ENCODE measurements at regions of chr12 and their contacts with region 1.

Region 1: DNA sequence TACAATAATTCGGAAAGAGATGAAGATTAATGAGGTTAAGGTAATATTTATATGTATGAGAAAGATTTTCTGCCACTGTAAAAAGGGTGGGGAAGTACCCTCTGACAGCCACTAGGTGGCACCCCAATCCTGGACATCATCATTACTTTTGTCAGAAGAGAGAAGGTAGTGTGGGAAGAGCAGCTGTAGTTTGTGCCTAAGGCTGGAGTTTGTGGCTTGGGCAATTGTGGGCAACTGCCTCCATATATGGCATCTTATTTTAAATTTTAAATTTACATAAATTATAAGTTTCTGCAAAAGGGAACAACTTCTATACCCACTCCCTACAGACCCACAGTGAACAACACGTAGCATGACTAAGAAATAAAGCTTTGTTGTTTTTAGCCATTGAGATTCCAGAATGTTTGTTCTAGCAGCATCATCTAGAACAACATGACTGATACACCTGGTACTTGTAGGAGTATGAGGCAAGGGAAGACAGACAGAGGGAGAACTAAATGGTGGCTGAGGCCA is 34.4 kb upstream of the SYCP3 start:
- DNase-seq: peak; percentile 65 to 76
- ATAC-seq: peak; percentile 86 to 94
- H3K4me3 ChIP-seq: no peak overlapping the region
- H3K27ac ChIP-seq: no peak overlapping the region
- H3K4me1 ChIP-seq: no peaks in the 10 kb centered on the region
- CTCF ChIP-seq: peak; percentile 97
- EP300 ChIP-seq: no peak
- POLR2A ChIP-seq: no peak
- RAD21 ChIP-seq: peak; percentile 91 to 93

Region 2: DNA sequence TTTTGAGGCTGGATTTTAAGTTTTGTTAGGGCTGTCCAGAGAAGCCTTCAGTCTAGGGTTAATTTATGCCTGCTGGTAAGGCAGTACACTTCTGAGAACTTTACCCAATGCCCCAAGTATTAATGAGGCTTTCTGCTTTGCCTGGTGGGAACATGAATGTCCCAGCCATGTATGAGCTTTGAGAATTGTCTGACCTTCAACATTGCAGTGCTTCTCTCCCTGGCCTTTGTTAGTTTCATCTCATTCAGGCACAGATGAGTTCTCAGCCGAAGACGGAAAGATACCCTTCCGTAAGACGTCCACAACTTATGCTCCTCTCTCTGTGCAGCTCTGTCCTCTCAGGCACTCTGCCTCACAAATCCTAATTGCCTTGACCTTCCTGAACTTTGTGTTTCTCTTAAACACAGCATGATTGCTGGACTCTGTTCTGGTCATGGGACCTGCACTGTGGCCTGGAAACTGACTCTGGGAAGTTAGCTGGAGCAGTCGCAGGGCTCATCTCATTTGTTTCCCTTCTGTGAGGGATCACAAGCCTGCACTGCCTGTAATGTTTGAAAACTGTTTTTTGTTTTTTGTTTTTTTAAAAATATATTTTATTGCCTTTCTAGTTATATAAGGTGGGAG is 60.5 kb before region 1 on chr12:
- CTCF ChIA-PET with region 1: no interaction called
- POLR2A ChIA-PET with region 1: no interaction called
- DNase-seq: no peak
- ATAC-seq: peak; percentile 39 to 49; a peak in 3 of 6 replicates
- H3K4me3 ChIP-seq: no peak overlapping the region
- H3K27ac ChIP-seq: no peak overlapping the region
- H3K4me1 ChIP-seq: peaks cover 5% of the 10 kb centered on the region; the same call in 1 of the 3 replicates
- CTCF ChIP-seq: no peak
- EP300 ChIP-seq: no peak
- POLR2A ChIP-seq: no peak
- RAD21 ChIP-seq: no peak

Region 3: GRCh38 chr12:101759396-101760047 is 14.2 kb before region 1 on chr12:
- CTCF ChIA-PET with region 1: interaction called, 28 read pairs
- POLR2A ChIA-PET with region 1: no interaction called
- DNase-seq: peak; percentile 43
- ATAC-seq: peak; percentile 80 to 89; a peak in 5 of 6 replicates
- H3K4me3 ChIP-seq: no peak overlapping the region
- H3K27ac ChIP-seq: no peak overlapping the region
- H3K4me1 ChIP-seq: 0 out of 3 replicates have a peak, but pooled peaks cover 3% of the 10 kb centered on the region
- CTCF ChIP-seq: peak; percentile 64
- EP300 ChIP-seq: no peak
- POLR2A ChIP-seq: no peak
- RAD21 ChIP-seq: peak; percentile 57 to 76

Region 4: GRCh38 chr12:101830367-101831325 is 56.9 kb after region 1 on chr12 and contains the start of gene GNPTAB:
- CTCF ChIA-PET with region 1: interaction called, 78 read pairs
- POLR2A ChIA-PET with region 1: interaction called, 6 read pairs
- DNase-seq: peak; percentile 94 to 95
- ATAC-seq: peak; percentile 93 to 94
- H3K4me3 ChIP-seq: peak within 1 kb of the TSS; percentile 73
- H3K27ac ChIP-seq: peak within 1 kb of the TSS; percentile 79 to 93
- H3K4me1 ChIP-seq: peaks cover 19% of the 10 kb centered on the region
- CTCF ChIP-seq: peak; percentile 91
- EP300 ChIP-seq: no peak
- POLR2A ChIP-seq: peak; percentile 76
- RAD21 ChIP-seq: peak; percentile 44 to 64; a peak in 4 of 5 replicates
- polyA plus RNA-seq, gene GNPTAB: 29.3 and 35.2 TPM in 2 replicates

Region 5: DNA sequence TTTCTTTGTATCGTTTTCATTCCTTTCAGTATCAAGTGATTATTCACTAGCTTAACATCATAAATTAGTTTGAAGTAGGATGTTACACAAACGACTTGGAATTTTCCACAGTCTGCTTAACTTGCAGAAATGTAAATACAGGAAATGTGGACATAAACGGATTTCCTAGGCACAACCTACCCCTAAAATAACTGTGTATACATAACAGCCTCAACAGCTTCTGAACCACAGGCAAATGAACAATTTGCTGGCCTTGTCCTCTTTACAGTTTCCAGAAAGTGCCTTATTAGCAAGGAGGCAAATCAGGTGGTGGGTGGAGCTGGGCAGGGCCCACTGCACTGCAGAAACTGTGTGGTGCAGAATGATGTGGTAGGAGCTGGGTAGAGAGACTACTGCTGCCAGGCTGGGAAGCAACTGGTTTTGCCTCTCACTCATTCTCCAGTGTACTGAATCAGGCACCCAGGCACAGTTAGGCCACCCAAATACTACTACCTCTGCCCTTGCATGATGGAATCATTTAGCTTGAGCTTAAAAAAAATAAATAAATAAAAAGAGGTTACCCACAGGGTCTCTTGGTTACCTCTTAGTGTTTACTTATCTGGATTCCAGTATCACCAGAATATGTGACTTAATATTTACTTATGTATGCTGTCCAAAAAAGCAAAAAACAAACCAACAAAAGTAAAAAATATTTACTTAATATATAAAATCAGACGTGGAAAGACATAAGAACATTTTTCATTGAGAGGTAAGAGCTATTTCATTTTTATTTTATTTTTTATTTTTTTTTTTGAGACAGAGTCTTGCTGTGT is 118.0 kb after region 1 on chr12:
- CTCF ChIA-PET with region 1: interaction called, 14 read pairs
- POLR2A ChIA-PET with region 1: no interaction called
- DNase-seq: peak in 1 of 2 experiments; percentile 67
- ATAC-seq: peak; percentile 91 to 95
- H3K4me3 ChIP-seq: no peak overlapping the region
- H3K27ac ChIP-seq: peak overlapping the region; percentile 58 to 89
- H3K4me1 ChIP-seq: peaks cover 54% of the 10 kb centered on the region
- CTCF ChIP-seq: no peak
- EP300 ChIP-seq: no peak
- POLR2A ChIP-seq: no peak
- RAD21 ChIP-seq: no peak